Ovary (tissue), 10 donors: ENCODE measurements at regions of chr17 and their contacts with region 1.

Region 1: DNA sequence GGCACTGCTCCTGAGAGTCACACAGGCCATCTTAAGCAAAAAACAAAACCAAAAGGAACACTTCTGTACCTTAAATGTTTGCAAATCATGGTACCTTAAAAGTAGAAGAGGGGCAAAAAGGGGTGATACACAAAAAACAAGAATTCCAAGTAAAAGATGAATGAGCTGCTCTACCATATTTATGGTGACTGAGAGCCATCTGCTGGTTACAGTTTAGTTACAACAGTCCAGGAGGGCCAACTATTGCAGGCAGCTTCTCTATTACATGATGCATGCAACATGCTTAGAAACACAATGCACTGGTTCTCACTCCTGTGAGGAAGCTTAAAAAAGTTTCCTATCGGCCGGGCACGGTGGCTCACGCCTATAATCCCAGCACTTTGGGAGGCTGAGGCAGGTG is 53.5 kb downstream of the STX8 start:
- DNase-seq: no peak
- H3K4me3 ChIP-seq: no peak overlapping the region
- H3K27ac ChIP-seq: no peak overlapping the region
- H3K4me1 ChIP-seq: no peaks in the 10 kb centered on the region
- H3K27me3 ChIP-seq: no peaks in the 10 kb centered on the region
- CTCF ChIP-seq: peak in 2 of 3 donors; percentile 15 to 35
- EP300 ChIP-seq: no peak
- POLR2A ChIP-seq: no peak

Region 2: DNA sequence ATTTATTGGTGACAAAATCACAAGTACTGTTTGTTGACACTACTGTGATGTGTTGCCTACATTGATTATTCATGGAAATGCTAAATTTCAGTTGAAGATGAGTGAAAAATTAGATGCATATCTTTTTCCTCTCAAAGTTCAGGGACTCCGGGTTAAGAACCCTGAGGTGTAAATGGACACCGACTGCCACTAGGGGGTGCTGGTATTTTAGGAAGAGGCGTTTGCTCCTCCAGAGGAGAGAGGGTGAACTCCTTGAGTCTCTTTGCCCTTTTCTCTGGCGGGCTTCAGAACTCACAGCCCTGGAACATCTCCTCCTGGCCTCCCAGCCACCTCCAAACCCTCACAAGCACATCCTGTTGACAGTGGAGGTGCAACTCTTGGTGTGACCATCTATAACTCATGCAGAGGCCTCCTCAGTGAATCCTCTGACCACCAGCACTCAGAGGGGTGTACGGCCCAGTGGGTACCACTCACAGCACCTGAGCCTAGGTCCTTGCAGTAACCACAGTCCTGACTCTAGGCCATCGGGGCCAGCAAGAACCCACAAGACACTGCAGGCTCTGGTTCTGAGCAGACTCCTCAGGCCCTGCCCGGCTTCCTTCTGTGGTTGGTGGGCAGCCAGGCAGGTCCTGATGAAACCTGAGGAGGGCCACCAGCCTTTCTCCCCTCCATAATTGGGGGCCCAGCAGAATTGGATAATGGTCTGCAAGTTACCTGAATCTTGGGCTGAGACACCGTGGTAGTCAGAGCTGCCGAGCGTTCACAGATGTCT is 530.4 kb before region 1 on chr17:
- intact Hi-C with region 1: loop called in 3 of 4 experiments (anchors 10 kb)
- DNase-seq: peak in 1 of 5 donors; percentile 34
- H3K4me3 ChIP-seq: no peak overlapping the region
- H3K27ac ChIP-seq: no peak overlapping the region
- H3K4me1 ChIP-seq: no peaks in the 10 kb centered on the region
- H3K27me3 ChIP-seq: no peaks in the 10 kb centered on the region
- CTCF ChIP-seq: no peak
- EP300 ChIP-seq: no peak
- POLR2A ChIP-seq: no peak

Region 3: DNA sequence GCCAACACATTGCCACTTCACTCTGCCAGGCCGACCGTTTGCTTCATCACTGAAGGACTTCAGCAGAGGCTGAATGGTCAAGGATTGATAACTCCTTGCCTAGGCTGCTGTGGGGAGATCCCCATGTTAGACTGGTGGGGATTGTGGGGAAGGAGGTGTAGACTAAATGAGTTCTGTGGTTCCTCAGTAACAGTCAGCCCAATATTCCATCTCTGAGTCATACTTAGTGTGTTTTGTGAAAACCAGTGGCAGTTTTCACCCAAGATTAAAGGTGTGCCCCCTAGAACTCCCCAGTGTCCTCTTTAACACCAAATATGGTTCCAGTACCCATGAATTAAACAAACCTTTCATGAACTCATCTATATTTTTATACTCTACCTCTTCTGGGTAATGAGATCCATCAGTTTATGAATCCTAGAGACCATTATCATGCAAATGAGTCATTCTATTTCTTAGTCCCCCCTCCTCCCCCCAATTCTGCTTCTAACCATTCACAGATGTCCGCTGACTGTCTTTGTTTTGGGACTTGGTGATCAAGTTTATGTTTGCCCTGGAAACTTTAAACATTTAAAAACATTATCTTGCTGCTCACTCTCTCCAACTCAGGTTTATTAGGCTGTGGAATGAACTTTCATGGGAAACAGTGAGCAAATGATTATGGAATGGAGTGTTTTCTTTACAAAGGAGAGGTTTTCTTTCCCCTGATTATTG is 743.2 kb after region 1 on chr17:
- intact Hi-C with region 1: no loop called
- DNase-seq: no peak
- H3K4me3 ChIP-seq: no peak overlapping the region
- H3K27ac ChIP-seq: no peak overlapping the region
- H3K4me1 ChIP-seq: no peaks in the 10 kb centered on the region
- H3K27me3 ChIP-seq: no peaks in the 10 kb centered on the region
- CTCF ChIP-seq: no peak
- EP300 ChIP-seq: no peak
- POLR2A ChIP-seq: no peak